ENCODE measurements at regions of chrX and their contacts with region 1.

Region 1: GRCh38 chrX:110146521-110146920 is 143.6 kb downstream of the TMEM164 start:
- DNase-seq: peak; percentile 30 to 49 (median 38)
- H3K4me3 ChIP-seq: no peak overlapping the region
- H3K4me3 Mint-ChIP-seq: no peak overlapping the region
- H3K27ac ChIP-seq: no peak overlapping the region
- H3K27ac Mint-ChIP-seq: peak overlapping the region in 1 of 7 donors; percentile 24
- H3K4me1 ChIP-seq: peaks cover 4% of the 10 kb centered on the region
- H3K4me1 Mint-ChIP-seq: peaks cover 0 to 13% (median 6%) of the 10 kb centered on the region in 4 donors
- H3K27me3 ChIP-seq: no peaks in the 10 kb centered on the region
- H3K27me3 Mint-ChIP-seq: no peaks in the 10 kb centered on the region

Region 2: DNA sequence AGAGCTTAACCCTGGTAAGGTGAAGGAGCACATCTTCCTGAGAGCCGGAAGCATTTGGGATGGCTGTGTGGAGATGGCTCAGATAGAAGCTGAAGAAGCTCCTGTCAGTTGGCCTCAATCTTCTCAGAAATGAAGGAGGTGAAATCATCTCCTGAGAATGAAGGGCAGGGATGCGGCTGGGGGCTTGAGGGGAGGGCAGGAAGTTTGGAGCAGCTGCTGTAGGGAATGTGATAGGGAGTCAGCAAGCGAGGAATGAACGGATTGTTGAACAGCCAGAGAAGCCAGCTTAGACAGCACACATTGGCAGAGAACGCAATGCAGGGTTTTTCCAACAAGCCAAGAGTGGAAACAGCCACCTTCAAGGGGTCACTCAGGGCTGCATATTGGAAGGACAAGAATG is 531.6 kb before region 1 on chrX:
- CTCF ChIA-PET with region 1: no interaction called
- POLR2A ChIA-PET with region 1: no interaction called
- intact Hi-C with region 1: no loop called
- DNase-seq: no peak
- H3K4me3 ChIP-seq: no peak overlapping the region
- H3K4me3 Mint-ChIP-seq: no peak overlapping the region
- H3K27ac ChIP-seq: no peak overlapping the region
- H3K27ac Mint-ChIP-seq: no peak overlapping the region
- H3K4me1 ChIP-seq: no peaks in the 10 kb centered on the region
- H3K4me1 Mint-ChIP-seq: no peaks in the 10 kb centered on the region
- H3K27me3 ChIP-seq: no peaks in the 10 kb centered on the region
- H3K27me3 Mint-ChIP-seq: no peaks in the 10 kb centered on the region

Region 3: GRCh38 chrX:109890895-109891502 is 255.5 kb before region 1 on chrX:
- CTCF ChIA-PET with region 1: interaction called, 16 read pairs
- POLR2A ChIA-PET with region 1: no interaction called
- intact Hi-C with region 1: loop called (anchors 10 kb)
- DNase-seq: peak; percentile 33 to 46 (median 44)
- H3K4me3 ChIP-seq: no peak overlapping the region
- H3K4me3 Mint-ChIP-seq: peak overlapping the region in 1 of 8 donors; percentile 23
- H3K27ac ChIP-seq: no peak overlapping the region
- H3K27ac Mint-ChIP-seq: no peak overlapping the region
- H3K4me1 ChIP-seq: no peaks in the 10 kb centered on the region
- H3K4me1 Mint-ChIP-seq: peaks cover 0 to 3% (median 0%) of the 10 kb centered on the region in 4 donors
- H3K27me3 ChIP-seq: no peaks in the 10 kb centered on the region
- H3K27me3 Mint-ChIP-seq: peaks cover 0 to 4% of the 10 kb centered on the region in 2 donors

Region 4: GRCh38 chrX:110135618-110136017 is 10.9 kb before region 1 on chrX:
- CTCF ChIA-PET with region 1: interaction called, 16 read pairs
- POLR2A ChIA-PET with region 1: no interaction called
- intact Hi-C with region 1: no loop called
- DNase-seq: no peak
- H3K4me3 ChIP-seq: no peak overlapping the region
- H3K4me3 Mint-ChIP-seq: no peak overlapping the region
- H3K27ac ChIP-seq: no peak overlapping the region
- H3K27ac Mint-ChIP-seq: no peak overlapping the region
- H3K4me1 ChIP-seq: no peaks in the 10 kb centered on the region
- H3K4me1 Mint-ChIP-seq: no peaks in the 10 kb centered on the region
- H3K27me3 ChIP-seq: no peaks in the 10 kb centered on the region
- H3K27me3 Mint-ChIP-seq: no peaks in the 10 kb centered on the region

Region 5: DNA sequence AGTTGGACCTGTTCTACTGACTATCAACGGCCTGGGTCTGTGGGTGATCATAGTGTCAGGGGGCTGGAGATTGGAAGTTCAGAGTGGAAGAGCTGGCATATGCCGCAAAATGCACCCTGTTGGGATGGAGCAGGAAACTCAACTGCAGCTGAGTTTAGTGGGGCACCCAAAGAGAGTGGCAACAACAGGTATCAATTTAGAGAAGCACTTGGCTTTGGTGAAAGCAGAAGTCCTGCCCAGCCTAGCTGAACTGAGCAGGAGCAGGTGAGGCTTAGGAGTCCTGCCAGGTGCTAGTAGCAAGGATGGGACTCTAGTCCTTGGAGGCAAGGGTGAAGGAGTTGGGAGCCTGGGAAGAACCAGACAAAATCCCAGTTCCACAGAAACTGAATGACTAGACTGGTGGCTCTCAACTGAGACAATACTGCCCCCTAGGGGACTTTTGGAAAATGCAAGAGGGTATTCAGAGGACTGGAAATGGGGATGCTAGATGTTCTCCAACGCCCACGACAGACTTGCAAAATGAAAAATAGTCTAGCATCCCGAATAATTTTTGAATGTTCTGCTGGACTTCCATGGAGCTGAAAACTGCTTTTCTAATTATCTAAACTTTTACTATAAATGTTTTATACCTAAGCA is 261.5 kb after region 1 on chrX:
- CTCF ChIA-PET with region 1: interaction called, 434 read pairs
- POLR2A ChIA-PET with region 1: no interaction called
- intact Hi-C with region 1: loop called (anchors 1 kb)
- DNase-seq: peak; percentile 45 to 64 (median 58)
- H3K4me3 ChIP-seq: no peak overlapping the region
- H3K4me3 Mint-ChIP-seq: no peak overlapping the region
- H3K27ac ChIP-seq: no peak overlapping the region
- H3K27ac Mint-ChIP-seq: no peak overlapping the region
- H3K4me1 ChIP-seq: no peaks in the 10 kb centered on the region
- H3K4me1 Mint-ChIP-seq: peaks cover 0 to 2% (median under 1%) of the 10 kb centered on the region in 4 donors
- H3K27me3 ChIP-seq: no peaks in the 10 kb centered on the region
- H3K27me3 Mint-ChIP-seq: peaks cover under 1 to 3% of the 10 kb centered on the region in 2 donors

Region 6: DNA sequence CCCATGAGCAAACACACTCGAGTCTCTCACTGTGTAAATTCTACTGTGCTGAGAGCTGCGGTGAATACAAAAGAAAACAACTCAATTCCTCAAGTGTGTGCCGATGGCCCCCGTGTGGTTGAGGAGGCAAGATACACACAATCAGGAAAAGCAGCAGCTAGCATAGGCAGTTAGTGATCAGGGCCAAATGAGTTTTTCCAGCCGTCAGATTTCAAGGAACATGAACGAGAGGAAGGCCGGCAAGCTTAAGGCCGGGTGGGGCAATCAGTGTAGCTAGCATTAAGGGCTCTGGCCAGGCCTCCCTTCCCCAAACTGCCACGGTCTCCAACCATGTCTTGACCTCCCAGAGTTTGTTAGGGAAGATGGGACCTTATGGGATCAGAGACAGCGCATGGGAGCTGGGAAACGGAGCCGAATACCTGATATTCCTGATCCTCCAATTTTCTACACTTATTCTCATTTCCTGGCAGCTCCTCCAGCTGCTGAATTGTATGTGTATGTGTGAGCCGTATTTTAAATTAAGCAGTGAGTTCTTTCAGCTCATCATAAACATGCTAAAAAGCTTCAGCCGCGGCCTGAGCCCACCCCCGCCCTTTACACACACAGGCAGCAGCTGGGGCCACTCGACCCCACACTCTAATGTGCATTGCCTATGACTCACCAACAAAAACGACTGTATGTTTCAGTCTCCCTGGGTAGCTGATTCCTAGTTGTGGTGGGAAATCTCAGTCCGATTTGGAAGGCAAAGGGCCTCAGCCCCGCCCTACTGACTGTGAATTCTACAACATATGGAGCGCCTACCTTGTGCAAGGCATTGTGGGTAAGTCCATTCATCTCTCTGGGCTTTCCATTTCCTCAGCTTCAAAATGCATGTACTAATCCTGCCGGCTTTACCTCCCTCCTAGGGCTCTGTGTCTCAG is 272.1 kb after region 1 on chrX:
- CTCF ChIA-PET with region 1: interaction called, 434 read pairs
- POLR2A ChIA-PET with region 1: no interaction called
- intact Hi-C with region 1: loop called (anchors 1 kb)
- DNase-seq: no peak
- H3K4me3 ChIP-seq: no peak overlapping the region
- H3K4me3 Mint-ChIP-seq: no peak overlapping the region
- H3K27ac ChIP-seq: no peak overlapping the region
- H3K27ac Mint-ChIP-seq: no peak overlapping the region
- H3K4me1 ChIP-seq: no peaks in the 10 kb centered on the region
- H3K4me1 Mint-ChIP-seq: peaks cover 0 to 1% (median 0%) of the 10 kb centered on the region in 4 donors
- H3K27me3 ChIP-seq: no peaks in the 10 kb centered on the region
- H3K27me3 Mint-ChIP-seq: peaks cover 0 to 1% of the 10 kb centered on the region in 2 donors

Measured in CD4-positive, alpha-beta memory T cell (primary cell).